GM12878 (cell line): ENCODE measurements at regions of chr2 and their contacts with region 1.

Region 1: GRCh38 chr2:174603280-174603679 is 5.7 kb upstream of the WIPF1 start:
- DNase-seq: no peak
- ATAC-seq: peak; percentile 48
- H3K4me3 ChIP-seq: no peak overlapping the region
- H3K27ac ChIP-seq: no peak overlapping the region
- H3K4me1 ChIP-seq: peaks cover 44% of the 10 kb centered on the region
- H3K27me3 ChIP-seq: no peaks in the 10 kb centered on the region
- CTCF ChIP-seq: peak; percentile 66 to 76 (median 70)
- EP300 ChIP-seq: no peak
- POLR2A ChIP-seq: no peak
- RAD21 ChIP-seq: peak; percentile 68

Region 2: DNA sequence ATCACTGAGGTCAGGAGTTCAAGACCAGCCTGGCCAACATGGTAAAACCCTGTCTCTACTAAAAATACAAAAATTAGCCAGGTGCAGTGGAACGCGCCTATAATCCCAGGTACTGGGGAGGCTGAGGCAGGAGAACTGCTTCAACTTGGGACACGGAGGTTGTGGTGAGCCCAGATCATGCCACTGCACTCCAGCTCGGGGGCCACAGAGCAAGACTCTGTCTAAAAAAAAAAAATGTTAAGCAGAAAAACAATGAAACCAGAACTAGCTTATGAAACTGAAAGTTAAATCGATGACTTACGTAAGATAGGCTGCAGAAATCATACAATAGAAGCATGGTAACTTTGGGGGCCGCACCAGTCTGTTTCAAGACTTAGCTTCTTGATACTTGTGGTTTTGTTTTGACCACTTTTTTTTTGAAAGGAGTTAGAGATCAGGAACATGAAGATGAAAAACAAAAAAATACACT is 110.3 kb before region 1 on chr2:
- CTCF ChIA-PET with region 1: interaction called, 13 read pairs
- POLR2A ChIA-PET with region 1: interaction called, 7 read pairs
- RAD21 ChIA-PET with region 1: interaction called, 4 read pairs
- SMC1A ChIA-PET with region 1: interaction called, 9 read pairs
- in situ Hi-C with region 1: no loop called
- intact Hi-C with region 1: loop called (anchors 5 kb)
- DNase-seq: peak; percentile 85
- ATAC-seq: peak; percentile 94
- H3K4me3 ChIP-seq: peak overlapping the region; percentile 41
- H3K27ac ChIP-seq: peak overlapping the region; percentile 87
- H3K4me1 ChIP-seq: peaks cover 17% of the 10 kb centered on the region; the same call in 1 of the 2 replicates
- H3K27me3 ChIP-seq: no peaks in the 10 kb centered on the region
- CTCF ChIP-seq: no peak
- EP300 ChIP-seq: peak; percentile 33 to 65; a peak in 2 of 4 replicates
- POLR2A ChIP-seq: no peak
- RAD21 ChIP-seq: no peak

Region 3: GRCh38 chr2:174536304-174536703 is 67.0 kb before region 1 on chr2:
- CTCF ChIA-PET with region 1: no interaction called
- POLR2A ChIA-PET with region 1: no interaction called
- RAD21 ChIA-PET with region 1: no interaction called
- SMC1A ChIA-PET with region 1: no interaction called
- in situ Hi-C with region 1: no loop called
- intact Hi-C with region 1: no loop called
- DNase-seq: no peak
- ATAC-seq: peak; percentile 33
- H3K4me3 ChIP-seq: no peak overlapping the region
- H3K27ac ChIP-seq: no peak overlapping the region
- H3K4me1 ChIP-seq: peaks cover 5% of the 10 kb centered on the region
- H3K27me3 ChIP-seq: no peaks in the 10 kb centered on the region
- CTCF ChIP-seq: no peak
- EP300 ChIP-seq: no peak
- POLR2A ChIP-seq: no peak
- RAD21 ChIP-seq: no peak

Region 4: GRCh38 chr2:174553811-174554493 is 49.3 kb before region 1 on chr2:
- CTCF ChIA-PET with region 1: interaction called, 7 read pairs
- POLR2A ChIA-PET with region 1: no interaction called
- RAD21 ChIA-PET with region 1: interaction called, 3 read pairs
- SMC1A ChIA-PET with region 1: interaction called, 10 read pairs
- in situ Hi-C with region 1: no loop called
- intact Hi-C with region 1: no loop called
- DNase-seq: no peak
- ATAC-seq: peak; percentile 83
- H3K4me3 ChIP-seq: no peak overlapping the region
- H3K27ac ChIP-seq: peak overlapping the region; percentile 57
- H3K4me1 ChIP-seq: peaks cover 15% of the 10 kb centered on the region
- H3K27me3 ChIP-seq: no peaks in the 10 kb centered on the region
- CTCF ChIP-seq: no peak
- EP300 ChIP-seq: no peak
- POLR2A ChIP-seq: no peak
- RAD21 ChIP-seq: no peak

Region 5: GRCh38 chr2:174615871-174616436 is 12.7 kb after region 1 on chr2:
- CTCF ChIA-PET with region 1: interaction called, 99 read pairs
- POLR2A ChIA-PET with region 1: interaction called, 246 read pairs
- RAD21 ChIA-PET with region 1: interaction called, 292 read pairs
- SMC1A ChIA-PET with region 1: interaction called, 457 read pairs
- in situ Hi-C with region 1: no loop called
- intact Hi-C with region 1: no loop called
- DNase-seq: no peak
- ATAC-seq: peak; percentile 57
- H3K4me3 ChIP-seq: no peak overlapping the region
- H3K27ac ChIP-seq: no peak overlapping the region
- H3K4me1 ChIP-seq: peaks cover 41% of the 10 kb centered on the region
- H3K27me3 ChIP-seq: no peaks in the 10 kb centered on the region
- CTCF ChIP-seq: no peak
- EP300 ChIP-seq: no peak
- POLR2A ChIP-seq: no peak
- RAD21 ChIP-seq: no peak

Region 6: DNA sequence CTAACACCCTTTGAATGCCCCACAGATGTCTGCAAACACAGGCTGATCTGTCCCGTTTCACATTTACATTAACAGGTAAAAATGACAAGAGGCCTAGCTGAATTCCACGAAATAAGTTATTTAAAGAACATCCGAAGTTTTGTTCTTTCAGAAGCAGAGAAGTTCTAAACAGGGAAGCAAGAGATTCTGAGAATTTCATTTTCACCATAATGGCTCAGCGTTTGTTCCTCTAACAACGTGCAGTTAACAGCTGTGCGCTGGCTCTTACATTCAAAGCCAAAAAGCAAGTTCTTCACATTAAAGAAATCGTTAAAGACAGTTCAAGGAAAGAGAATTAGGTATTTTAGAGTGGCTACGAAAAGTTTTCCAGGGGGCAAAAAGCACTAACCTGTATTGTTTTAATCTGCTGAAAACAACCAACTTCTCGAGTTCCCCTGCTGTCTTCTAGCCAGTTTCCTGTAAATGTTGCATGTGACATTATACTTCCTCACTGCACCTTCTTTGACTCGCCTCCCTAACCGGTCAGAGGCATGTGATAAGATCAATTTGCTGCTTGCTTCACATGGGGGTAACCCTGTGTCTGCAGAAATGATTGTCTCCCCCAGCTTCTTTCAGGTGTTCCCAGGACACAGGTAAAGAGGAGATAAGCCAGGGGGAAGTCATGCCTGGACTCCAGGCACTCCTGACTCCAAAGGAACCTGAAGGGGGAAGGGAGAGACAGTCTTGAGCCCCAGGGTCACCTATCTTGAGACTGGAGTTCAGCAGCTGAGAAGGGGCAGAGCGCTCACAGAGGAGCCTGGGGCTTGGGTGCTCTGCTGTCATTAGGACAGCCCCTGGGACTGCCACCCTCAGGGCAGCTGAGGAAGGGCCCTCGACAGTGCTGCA is 31.1 kb after region 1 on chr2:
- CTCF ChIA-PET with region 1: interaction called, 53 read pairs
- POLR2A ChIA-PET with region 1: interaction called, 72 read pairs
- RAD21 ChIA-PET with region 1: interaction called, 137 read pairs
- SMC1A ChIA-PET with region 1: interaction called, 512 read pairs
- in situ Hi-C with region 1: no loop called
- intact Hi-C with region 1: loop called (anchors 1 kb)
- DNase-seq: peak; percentile 65
- ATAC-seq: peak; percentile 85
- H3K4me3 ChIP-seq: peak overlapping the region; percentile 84
- H3K27ac ChIP-seq: peak overlapping the region; percentile 91
- H3K4me1 ChIP-seq: peaks cover 22% of the 10 kb centered on the region
- H3K27me3 ChIP-seq: no peaks in the 10 kb centered on the region
- CTCF ChIP-seq: peak; percentile 35 to 47 (median 45); a peak in 5 of 6 replicates
- EP300 ChIP-seq: no peak
- POLR2A ChIP-seq: peak; percentile 60
- RAD21 ChIP-seq: no peak

Region 7: GRCh38 chr2:174925046-174925784 is 321.9 kb after region 1 on chr2:
- CTCF ChIA-PET with region 1: no interaction called
- POLR2A ChIA-PET with region 1: no interaction called
- RAD21 ChIA-PET with region 1: no interaction called
- SMC1A ChIA-PET with region 1: no interaction called
- in situ Hi-C with region 1: no loop called
- intact Hi-C with region 1: no loop called
- DNase-seq: no peak
- ATAC-seq: no peak
- H3K4me3 ChIP-seq: no peak overlapping the region
- H3K27ac ChIP-seq: no peak overlapping the region
- H3K4me1 ChIP-seq: no peaks in the 10 kb centered on the region
- H3K27me3 ChIP-seq: no peaks in the 10 kb centered on the region
- CTCF ChIP-seq: no peak
- EP300 ChIP-seq: no peak
- POLR2A ChIP-seq: no peak
- RAD21 ChIP-seq: no peak